Mammary epithelial cell (primary cell): ENCODE measurements at regions of chr15 and their contacts with region 1.

Region 1: GRCh38 chr15:69081310-69082004 is 67.0 kb downstream of the NOX5 start:
- DNase-seq: peak; percentile 4
- H3K4me3 ChIP-seq: no peak overlapping the region
- H3K27ac ChIP-seq: no peak overlapping the region
- H3K4me1 ChIP-seq: peaks cover 19% of the 10 kb centered on the region
- H3K27me3 ChIP-seq: no peaks in the 10 kb centered on the region
- CTCF ChIP-seq: no peak

Region 2: DNA sequence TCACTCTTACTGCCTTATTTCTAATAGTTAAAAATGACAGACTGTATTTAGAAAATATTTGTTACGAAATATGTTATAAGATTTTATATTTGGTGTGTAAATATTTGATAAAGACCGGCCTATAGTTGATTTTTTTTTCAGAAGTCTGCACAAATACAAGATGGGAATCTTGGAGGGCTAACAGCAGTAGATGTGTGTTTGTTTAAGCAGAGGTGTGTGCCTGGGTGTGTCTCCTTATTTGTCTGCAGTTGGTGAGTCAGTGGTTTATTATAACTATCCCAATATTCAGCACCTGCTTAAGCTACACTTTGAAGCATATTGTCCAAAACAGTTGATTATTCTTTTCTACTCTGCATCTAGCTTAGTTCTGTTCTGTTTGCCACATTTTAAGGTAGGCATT is 91.4 kb after region 1 on chr15:
- CTCF ChIA-PET with region 1: no interaction called
- dilution Hi-C with region 1: no loop called
- in situ Hi-C with region 1: no loop called
- intact Hi-C with region 1: no loop called
- DNase-seq: no peak
- H3K4me3 ChIP-seq: no peak overlapping the region
- H3K27ac ChIP-seq: no peak overlapping the region
- H3K4me1 ChIP-seq: no peaks in the 10 kb centered on the region
- H3K27me3 ChIP-seq: no peaks in the 10 kb centered on the region
- CTCF ChIP-seq: no peak

Region 3: GRCh38 chr15:69303337-69304175 is 222.1 kb after region 1 on chr15:
- CTCF ChIA-PET with region 1: interaction called, 10 read pairs
- dilution Hi-C with region 1: no loop called
- in situ Hi-C with region 1: no loop called
- intact Hi-C with region 1: no loop called
- DNase-seq: no peak
- H3K4me3 ChIP-seq: no peak overlapping the region
- H3K27ac ChIP-seq: peak overlapping the region; percentile 27
- H3K4me1 ChIP-seq: peaks cover 36% of the 10 kb centered on the region
- H3K27me3 ChIP-seq: no peaks in the 10 kb centered on the region
- CTCF ChIP-seq: peak; percentile 13 to 24